Naive thymus-derived CD4-positive, alpha-beta T cell (primary cell): ENCODE measurements at regions of chr14 and their contacts with region 1.

Region 1: DNA sequence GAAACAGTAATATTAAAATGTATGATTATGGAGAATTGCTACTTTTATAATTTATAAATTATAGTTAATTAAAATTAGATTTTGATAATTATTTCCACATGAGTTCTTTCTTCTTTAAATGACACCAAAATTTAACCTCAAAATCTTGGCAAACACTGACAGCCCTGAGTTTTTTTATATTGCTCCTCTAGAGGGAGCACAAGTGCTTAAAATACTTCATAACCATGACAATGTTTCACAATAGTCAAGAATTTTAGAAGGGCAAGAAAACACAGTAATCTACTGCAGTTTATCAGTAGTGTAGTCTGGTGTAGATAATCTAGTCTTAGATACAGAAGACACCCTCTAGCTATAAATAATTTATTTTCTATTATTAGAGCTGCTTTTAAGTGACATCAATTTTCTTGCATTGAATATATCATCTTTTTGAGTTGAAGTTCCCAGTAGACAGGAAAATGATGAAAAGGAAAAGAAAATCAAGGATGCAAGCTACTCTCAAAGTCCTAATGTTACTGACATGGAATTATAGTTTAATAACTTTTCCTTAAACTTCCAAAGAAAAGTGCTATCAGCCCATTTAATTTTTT is 14.3 kb upstream of the PTGER2 start:
- DNase-seq: peak in 6 of 9 donors; percentile 28 to 68 (median 51)
- ATAC-seq: peak; percentile 84
- H3K4me3 ChIP-seq: no peak overlapping the region
- H3K4me3 Mint-ChIP-seq: peak overlapping the region in 1 of 10 donors; percentile 23
- H3K27ac ChIP-seq: no peak overlapping the region
- H3K27ac Mint-ChIP-seq: no peak overlapping the region
- H3K4me1 ChIP-seq: peaks cover 3 to 5% of the 10 kb centered on the region in 2 donors
- H3K4me1 Mint-ChIP-seq: peaks cover 8 to 63% (median 25%) of the 10 kb centered on the region in 7 donors
- H3K27me3 ChIP-seq: no peaks in the 10 kb centered on the region
- H3K27me3 Mint-ChIP-seq: peaks cover 0 to 9% (median 0%) of the 10 kb centered on the region in 5 donors

Region 2: DNA sequence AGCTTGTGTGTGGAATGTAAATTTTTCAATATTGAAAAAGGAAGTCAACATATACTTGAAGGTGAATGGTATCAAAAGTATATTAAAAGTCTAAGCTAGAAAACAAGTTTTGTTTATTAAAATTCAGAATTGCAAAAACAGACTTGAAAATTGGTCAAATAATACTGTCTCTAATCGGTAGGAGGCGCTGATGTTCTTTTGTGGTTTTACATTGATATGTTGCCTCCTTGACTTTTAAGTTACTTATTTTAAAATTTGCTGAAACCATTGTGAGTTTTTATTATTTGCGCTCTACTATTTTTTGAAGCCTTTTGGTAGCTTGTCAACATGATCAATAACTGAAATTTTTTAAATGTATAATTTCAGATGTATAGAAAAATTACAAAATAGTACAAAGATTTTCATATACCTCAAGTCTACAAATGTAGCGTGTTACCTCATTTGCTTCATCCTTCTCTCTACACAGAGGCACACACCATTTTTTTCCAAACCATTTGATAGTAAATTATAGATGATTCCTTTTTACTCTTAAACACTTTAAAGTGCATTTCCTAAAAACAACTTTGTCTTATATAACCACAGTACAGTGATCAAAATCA is 303.5 kb before region 1 on chr14:
- CTCF ChIA-PET with region 1: interaction called, 3 read pairs
- POLR2A ChIA-PET with region 1: no interaction called
- intact Hi-C with region 1: loop called in 1 of 2 experiments (anchors 5 kb)
- DNase-seq: peak in 6 of 9 donors; percentile 17 to 41 (median 30)
- ATAC-seq: no peak
- H3K4me3 ChIP-seq: no peak overlapping the region
- H3K4me3 Mint-ChIP-seq: no peak overlapping the region
- H3K27ac ChIP-seq: no peak overlapping the region
- H3K27ac Mint-ChIP-seq: peak overlapping the region in 2 of 9 donors; percentile 9 to 62
- H3K4me1 ChIP-seq: peaks cover 2 to 6% of the 10 kb centered on the region in 2 donors
- H3K4me1 Mint-ChIP-seq: peaks cover 13 to 59% (median 48%) of the 10 kb centered on the region in 7 donors
- H3K27me3 ChIP-seq: no peaks in the 10 kb centered on the region
- H3K27me3 Mint-ChIP-seq: no peaks in the 10 kb centered on the region

Region 3: GRCh38 chr14:52131640-52132320 is 168.0 kb before region 1 on chr14:
- CTCF ChIA-PET with region 1: no interaction called
- POLR2A ChIA-PET with region 1: no interaction called
- intact Hi-C with region 1: no loop called
- DNase-seq: peak in 2 of 9 donors; percentile 6 to 10
- ATAC-seq: no peak
- H3K4me3 ChIP-seq: no peak overlapping the region
- H3K4me3 Mint-ChIP-seq: no peak overlapping the region
- H3K27ac ChIP-seq: no peak overlapping the region
- H3K27ac Mint-ChIP-seq: no peak overlapping the region
- H3K4me1 ChIP-seq: peaks cover 0 to 6% of the 10 kb centered on the region in 2 donors
- H3K4me1 Mint-ChIP-seq: peaks cover 0 to 13% (median 5%) of the 10 kb centered on the region in 7 donors
- H3K27me3 ChIP-seq: no peaks in the 10 kb centered on the region
- H3K27me3 Mint-ChIP-seq: peaks cover 5 to 35% (median 10%) of the 10 kb centered on the region in 5 donors

Region 4: DNA sequence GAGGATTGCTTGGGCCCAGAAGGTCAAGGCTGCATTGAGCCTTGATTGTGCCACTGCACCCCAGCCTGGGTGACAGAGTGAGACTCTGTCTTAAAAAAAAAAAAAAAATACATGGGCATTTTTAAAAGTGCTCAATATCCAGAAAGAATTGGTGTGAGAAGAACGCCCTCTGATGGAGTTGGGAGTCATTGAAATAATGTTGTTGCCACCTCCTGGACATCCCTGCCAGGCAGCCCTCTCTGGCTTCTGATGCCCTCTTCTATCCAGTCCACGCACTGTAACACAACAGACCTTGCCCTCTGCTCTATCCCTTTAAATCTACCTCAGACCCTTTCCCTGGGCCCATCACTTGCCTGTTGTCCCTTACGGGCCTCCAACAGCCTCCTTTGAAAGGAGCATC is 27.4 kb before region 1 on chr14:
- CTCF ChIA-PET with region 1: no interaction called
- POLR2A ChIA-PET with region 1: no interaction called
- intact Hi-C with region 1: no loop called
- DNase-seq: peak in 1 of 9 donors; percentile 23
- ATAC-seq: peak; percentile 64
- H3K4me3 ChIP-seq: no peak overlapping the region
- H3K4me3 Mint-ChIP-seq: peak overlapping the region in 1 of 10 donors; percentile 65
- H3K27ac ChIP-seq: no peak overlapping the region
- H3K27ac Mint-ChIP-seq: peak overlapping the region in 1 of 9 donors; percentile 43
- H3K4me1 ChIP-seq: peaks cover 0 to 11% of the 10 kb centered on the region in 2 donors
- H3K4me1 Mint-ChIP-seq: peaks cover 12 to 27% (median 19%) of the 10 kb centered on the region in 7 donors
- H3K27me3 ChIP-seq: no peaks in the 10 kb centered on the region
- H3K27me3 Mint-ChIP-seq: peaks cover 23 to 83% (median 33%) of the 10 kb centered on the region in 5 donors

Region 5: GRCh38 chr14:52325126-52325525 is 25.3 kb after region 1 on chr14:
- CTCF ChIA-PET with region 1: no interaction called
- POLR2A ChIA-PET with region 1: no interaction called
- intact Hi-C with region 1: no loop called
- DNase-seq: no peak
- ATAC-seq: peak; percentile 84
- H3K4me3 ChIP-seq: no peak overlapping the region
- H3K4me3 Mint-ChIP-seq: peak overlapping the region in 2 of 10 donors; percentile 37 to 86
- H3K27ac ChIP-seq: no peak overlapping the region
- H3K27ac Mint-ChIP-seq: peak overlapping the region in 5 of 9 donors; percentile 16 to 86 (median 31)
- H3K4me1 ChIP-seq: peaks cover 0 to 63% of the 10 kb centered on the region in 2 donors
- H3K4me1 Mint-ChIP-seq: peaks cover 9 to 88% (median 20%) of the 10 kb centered on the region in 7 donors
- H3K27me3 ChIP-seq: no peaks in the 10 kb centered on the region
- H3K27me3 Mint-ChIP-seq: peaks cover 0 to 2% (median 0%) of the 10 kb centered on the region in 5 donors

Region 6: DNA sequence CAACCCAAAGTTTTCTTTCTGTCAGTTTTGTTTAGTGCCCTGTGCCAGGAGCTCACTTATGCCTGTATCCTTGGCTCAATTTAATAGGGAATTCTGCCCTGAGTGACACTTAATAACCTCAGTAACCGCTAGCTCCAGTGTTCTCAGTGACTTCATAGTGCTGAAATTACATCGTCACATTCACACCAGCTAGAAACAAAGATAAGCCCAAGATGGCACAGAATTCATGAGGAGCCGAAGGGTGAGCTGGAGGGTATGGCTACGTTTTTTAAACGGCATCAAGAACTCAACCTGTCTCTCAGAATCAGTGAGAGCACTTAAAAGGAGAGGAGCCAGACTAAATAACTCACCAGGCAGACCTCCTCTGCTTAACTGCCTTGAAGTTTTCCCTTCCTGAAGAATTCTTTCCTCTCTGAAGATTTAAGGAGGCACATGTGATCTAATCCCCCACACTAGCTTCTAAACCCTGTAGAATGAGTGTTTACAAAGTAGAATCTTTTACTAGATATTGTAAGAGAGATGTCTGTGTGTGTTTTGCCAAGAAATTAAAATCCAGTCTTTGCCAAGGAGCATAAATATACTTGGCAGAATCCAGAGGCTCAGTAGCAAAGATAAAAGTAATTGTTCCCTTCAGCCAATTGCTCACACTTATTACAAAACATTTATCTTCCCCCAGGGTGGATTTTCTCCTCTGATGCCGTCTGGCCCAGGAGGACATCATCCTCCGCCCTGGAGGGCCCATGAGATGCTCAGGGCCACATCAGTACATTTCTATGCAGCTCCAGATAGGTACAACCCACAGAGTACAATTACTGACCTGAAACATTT is 51.7 kb after region 1 on chr14:
- CTCF ChIA-PET with region 1: interaction called, 3 read pairs
- POLR2A ChIA-PET with region 1: no interaction called
- intact Hi-C with region 1: loop called in 1 of 2 experiments (anchors 5 kb)
- DNase-seq: peak in 2 of 9 donors; percentile 2 to 10
- ATAC-seq: peak; percentile 54
- H3K4me3 ChIP-seq: peak overlapping the region; percentile 18
- H3K4me3 Mint-ChIP-seq: peak overlapping the region; percentile 48 to 94 (median 76)
- H3K27ac ChIP-seq: peak overlapping the region; percentile 59
- H3K27ac Mint-ChIP-seq: peak overlapping the region; percentile 81 to 100 (median 88)
- H3K4me1 ChIP-seq: peaks cover 46 to 53% of the 10 kb centered on the region in 2 donors
- H3K4me1 Mint-ChIP-seq: peaks cover 36 to 76% (median 62%) of the 10 kb centered on the region in 7 donors
- H3K27me3 ChIP-seq: no peaks in the 10 kb centered on the region
- H3K27me3 Mint-ChIP-seq: peaks cover 0 to 4% (median 0%) of the 10 kb centered on the region in 5 donors

Region 7: GRCh38 chr14:52473557-52473956 is 173.8 kb after region 1 on chr14:
- CTCF ChIA-PET with region 1: interaction called, 7 read pairs
- POLR2A ChIA-PET with region 1: interaction called, 3 read pairs
- intact Hi-C with region 1: loop called (anchors 1 kb)
- DNase-seq: peak in 7 of 9 donors; percentile 16 to 60 (median 42)
- ATAC-seq: peak; percentile 42
- H3K4me3 ChIP-seq: no peak overlapping the region
- H3K4me3 Mint-ChIP-seq: no peak overlapping the region
- H3K27ac ChIP-seq: no peak overlapping the region
- H3K27ac Mint-ChIP-seq: no peak overlapping the region
- H3K4me1 ChIP-seq: no peaks in the 10 kb centered on the region
- H3K4me1 Mint-ChIP-seq: peaks cover 4 to 40% (median 24%) of the 10 kb centered on the region in 7 donors
- H3K27me3 ChIP-seq: no peaks in the 10 kb centered on the region
- H3K27me3 Mint-ChIP-seq: no peaks in the 10 kb centered on the region

Region 8: DNA sequence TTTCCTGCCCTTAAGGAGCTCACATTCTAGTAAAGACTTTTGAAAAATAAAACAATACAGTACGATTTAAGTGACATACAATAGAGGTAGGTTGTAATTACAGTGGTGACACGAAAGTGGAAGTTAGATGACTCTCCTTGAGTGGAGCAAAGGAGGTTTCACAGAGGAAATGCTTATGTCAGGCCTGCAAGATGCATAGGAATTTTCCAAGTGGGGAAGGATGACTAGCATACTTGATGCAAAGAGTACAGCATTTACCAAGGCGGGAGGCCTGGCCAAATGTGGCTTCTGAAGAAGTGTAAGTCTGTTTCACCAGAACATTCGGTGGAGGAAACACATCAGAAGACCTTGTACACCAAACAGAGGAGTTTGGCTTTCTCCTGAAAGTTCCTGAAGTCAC is 340.4 kb after region 1 on chr14:
- CTCF ChIA-PET with region 1: no interaction called
- POLR2A ChIA-PET with region 1: no interaction called
- intact Hi-C with region 1: loop called in 1 of 2 experiments (anchors 10 kb)
- DNase-seq: no peak
- ATAC-seq: no peak
- H3K4me3 ChIP-seq: no peak overlapping the region
- H3K4me3 Mint-ChIP-seq: no peak overlapping the region
- H3K27ac ChIP-seq: no peak overlapping the region
- H3K27ac Mint-ChIP-seq: peak overlapping the region in 1 of 9 donors; percentile 43
- H3K4me1 ChIP-seq: no peaks in the 10 kb centered on the region
- H3K4me1 Mint-ChIP-seq: peaks cover 0 to 3% (median 0%) of the 10 kb centered on the region in 7 donors
- H3K27me3 ChIP-seq: no peaks in the 10 kb centered on the region
- H3K27me3 Mint-ChIP-seq: peaks cover 0 to 7% (median 0%) of the 10 kb centered on the region in 5 donors

Region 9: GRCh38 chr14:52706724-52707706 is 407.2 kb after region 1 on chr14 and contains the start of gene PSMC6:
- CTCF ChIA-PET with region 1: no interaction called
- POLR2A ChIA-PET with region 1: no interaction called
- intact Hi-C with region 1: loop called in 1 of 2 experiments (anchors 1 kb)
- DNase-seq: peak; percentile 82 to 93 (median 90)
- ATAC-seq: peak; percentile 99
- H3K4me3 ChIP-seq: peak within 1 kb of the TSS; percentile 74
- H3K4me3 Mint-ChIP-seq: peak within 1 kb of the TSS; percentile 96 to 100 (median 98)
- H3K27ac ChIP-seq: peak within 1 kb of the TSS; percentile 82
- H3K27ac Mint-ChIP-seq: peak within 1 kb of the TSS; percentile 95 to 98 (median 97)
- H3K4me1 ChIP-seq: peaks cover 11 to 16% of the 10 kb centered on the region in 2 donors
- H3K4me1 Mint-ChIP-seq: peaks cover 28 to 60% (median 52%) of the 10 kb centered on the region in 7 donors
- H3K27me3 ChIP-seq: no peaks in the 10 kb centered on the region
- H3K27me3 Mint-ChIP-seq: no peaks in the 10 kb centered on the region
- total RNA-seq, gene PSMC6: 84.8 to 131 (median 95.9) TPM

Region 10: DNA sequence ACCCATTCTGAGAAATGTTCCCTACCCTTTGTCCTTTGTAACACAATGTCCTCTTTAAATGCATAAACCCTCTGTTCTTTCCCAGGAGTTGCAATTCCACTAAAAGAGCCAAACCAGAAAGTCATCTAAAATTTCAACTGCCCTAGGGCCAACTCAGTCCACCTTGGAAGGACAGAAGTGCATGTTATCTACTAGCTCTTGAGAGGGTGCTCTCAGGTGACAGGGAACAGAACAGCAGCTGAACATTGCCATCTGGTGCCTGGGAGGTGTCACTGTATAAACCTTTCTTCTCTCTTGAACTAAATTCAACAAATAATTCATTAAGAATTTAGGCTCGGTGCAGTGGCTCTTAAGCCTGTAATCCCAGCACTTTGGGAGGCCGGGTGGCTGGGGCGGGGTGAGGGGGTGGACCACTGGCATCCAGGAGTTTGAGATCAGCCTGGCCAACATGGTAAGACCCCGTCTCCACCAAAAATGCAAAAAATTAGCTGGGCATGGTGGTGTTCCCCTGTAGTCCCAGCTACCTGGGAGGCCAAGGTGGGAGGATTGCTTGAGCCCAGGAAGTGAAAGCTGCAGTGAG is 661.4 kb after region 1 on chr14:
- CTCF ChIA-PET with region 1: interaction called, 4 read pairs
- POLR2A ChIA-PET with region 1: no interaction called
- intact Hi-C with region 1: loop called in 1 of 2 experiments (anchors 1 kb)
- DNase-seq: peak in 7 of 9 donors; percentile 35 to 63 (median 50)
- ATAC-seq: peak; percentile 84
- H3K4me3 ChIP-seq: no peak overlapping the region
- H3K4me3 Mint-ChIP-seq: no peak overlapping the region
- H3K27ac ChIP-seq: no peak overlapping the region
- H3K27ac Mint-ChIP-seq: peak overlapping the region in 1 of 9 donors; percentile 62
- H3K4me1 ChIP-seq: peaks cover 0 to 3% of the 10 kb centered on the region in 2 donors
- H3K4me1 Mint-ChIP-seq: peaks cover 0 to 7% (median 4%) of the 10 kb centered on the region in 7 donors
- H3K27me3 ChIP-seq: no peaks in the 10 kb centered on the region
- H3K27me3 Mint-ChIP-seq: peaks cover 0 to 5% (median 0%) of the 10 kb centered on the region in 5 donors